HEK293 (cell line): ENCODE measurements at regions of chr11 and their contacts with region 1.

Region 1: GRCh38 chr11:121194731-121195596 is 93.9 kb downstream of the TECTA start:
- H3K4me3 ChIP-seq: peak overlapping the region; percentile 15
- H3K27ac ChIP-seq: no peak overlapping the region
- H3K4me1 ChIP-seq: no peaks in the 10 kb centered on the region
- CTCF ChIP-seq: peak; percentile 57

Region 2: GRCh38 chr11:120912504-120912903 is 282.5 kb before region 1 on chr11:
- CTCF ChIA-PET with region 1: interaction called, 11 read pairs
- POLR2A ChIA-PET with region 1: no interaction called
- H3K4me3 ChIP-seq: no peak overlapping the region
- H3K27ac ChIP-seq: no peak overlapping the region
- H3K4me1 ChIP-seq: no peaks in the 10 kb centered on the region
- CTCF ChIP-seq: peak; percentile 37; the same call in 1 of the 2 replicates

Region 3: GRCh38 chr11:120952461-120953434 is 242.2 kb before region 1 on chr11:
- CTCF ChIA-PET with region 1: interaction called, 18 read pairs
- POLR2A ChIA-PET with region 1: no interaction called
- H3K4me3 ChIP-seq: no peak overlapping the region
- H3K27ac ChIP-seq: no peak overlapping the region
- H3K4me1 ChIP-seq: no peaks in the 10 kb centered on the region
- CTCF ChIP-seq: peak; percentile 23; the same call in 1 of the 2 replicates

Region 4: GRCh38 chr11:121082670-121083069 is 112.3 kb before region 1 on chr11:
- CTCF ChIA-PET with region 1: no interaction called
- POLR2A ChIA-PET with region 1: no interaction called
- H3K4me3 ChIP-seq: no peak overlapping the region
- H3K27ac ChIP-seq: no peak overlapping the region
- H3K4me1 ChIP-seq: no peaks in the 10 kb centered on the region
- CTCF ChIP-seq: no peak

Region 5: DNA sequence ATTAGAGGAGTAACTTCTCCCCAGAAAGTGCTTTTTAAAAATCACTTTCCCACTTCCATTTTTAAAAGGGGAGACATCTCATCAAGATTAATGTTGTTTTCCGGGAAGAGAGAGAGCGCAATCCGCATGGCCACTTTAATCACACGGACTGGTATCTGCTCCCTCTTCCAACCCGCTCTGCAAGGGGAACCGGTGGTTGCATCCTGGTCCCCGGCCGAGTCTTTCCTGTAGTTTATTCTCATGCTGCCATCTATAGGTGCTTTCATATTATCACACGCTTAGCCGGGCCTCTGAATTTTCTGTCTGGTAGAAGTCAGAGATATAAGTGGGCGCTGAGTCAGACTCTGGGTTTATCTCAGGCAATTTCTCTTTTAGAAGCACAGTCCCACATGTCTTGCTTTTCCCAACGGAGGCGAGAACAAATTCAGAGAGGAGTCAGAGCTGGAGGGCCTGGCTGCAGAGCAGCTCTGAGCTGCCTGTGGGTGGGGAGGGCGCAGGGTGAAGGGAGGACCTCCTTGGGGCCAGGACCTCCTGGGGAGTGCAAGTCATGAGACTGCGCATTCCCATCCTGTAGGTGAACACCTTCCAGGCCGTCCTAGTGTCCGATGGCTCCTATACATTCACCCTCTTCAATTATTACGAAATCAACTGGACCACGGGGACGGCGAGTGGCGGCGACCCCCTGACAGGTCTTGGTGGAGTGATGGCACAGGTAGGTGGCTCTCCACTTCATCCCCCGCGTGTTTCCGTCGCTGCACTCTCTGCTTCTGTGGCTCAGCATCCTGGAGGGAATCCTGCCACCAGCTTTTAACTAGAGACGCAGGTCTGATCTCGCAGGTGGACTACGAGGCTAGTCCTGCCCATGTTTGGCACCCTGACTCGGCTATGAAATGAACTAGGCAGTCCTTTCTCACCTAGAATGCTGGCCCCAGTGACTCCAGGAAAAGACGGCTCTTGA is 82.2 kb before region 1 on chr11:
- CTCF ChIA-PET with region 1: interaction called, 22 read pairs
- POLR2A ChIA-PET with region 1: no interaction called
- H3K4me3 ChIP-seq: no peak overlapping the region
- H3K27ac ChIP-seq: no peak overlapping the region
- H3K4me1 ChIP-seq: no peaks in the 10 kb centered on the region
- CTCF ChIP-seq: no peak

Region 6: GRCh38 chr11:121163658-121164308 is 31.2 kb before region 1 on chr11:
- CTCF ChIA-PET with region 1: interaction called, 14 read pairs
- POLR2A ChIA-PET with region 1: no interaction called
- H3K4me3 ChIP-seq: no peak overlapping the region
- H3K27ac ChIP-seq: no peak overlapping the region
- H3K4me1 ChIP-seq: no peaks in the 10 kb centered on the region
- CTCF ChIP-seq: no peak

Region 7: GRCh38 chr11:121207485-121208115 is 12.6 kb after region 1 on chr11:
- CTCF ChIA-PET with region 1: interaction called, 16 read pairs
- POLR2A ChIA-PET with region 1: no interaction called
- H3K4me3 ChIP-seq: no peak overlapping the region
- H3K27ac ChIP-seq: no peak overlapping the region
- H3K4me1 ChIP-seq: no peaks in the 10 kb centered on the region
- CTCF ChIP-seq: no peak